Activated T-helper 2 cell treated with anti-CD3 and anti-CD28 coated beads, Interferon-gamma antibody, Interleukin-2, Interleukin-4, amounts not matched to agents 10 μg/mL and 5 μg/mL and 100 μg/mL, durations not matched to agents 14 hours and 24 hours and 36 hours (primary cell): ENCODE measurements at regions of chr12 and their contacts with region 1.

Region 1: DNA sequence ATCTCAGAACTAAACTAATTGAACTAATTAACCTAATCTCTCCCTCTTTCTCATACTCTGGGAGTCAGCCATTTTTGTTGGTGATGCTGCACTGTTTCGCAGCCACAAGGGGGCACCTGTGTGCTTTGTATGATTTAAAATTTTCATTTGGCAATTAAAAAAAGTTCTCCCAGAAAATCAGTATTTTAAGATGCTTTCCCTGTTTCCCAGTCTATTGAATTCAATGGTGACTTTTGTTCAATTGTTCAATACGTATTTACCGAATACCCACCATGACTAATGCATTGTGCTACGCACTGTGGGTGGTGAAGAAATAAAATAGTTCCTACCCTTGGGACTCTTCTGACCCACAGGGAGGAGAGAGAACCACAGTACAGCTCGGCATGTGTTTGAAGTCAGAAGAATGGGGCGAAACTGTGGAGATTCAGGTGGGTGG is 63.7 kb downstream of the ZNF664 start:
- DNase-seq: peak; percentile 16
- H3K4me3 Mint-ChIP-seq: no peak overlapping the region
- H3K27ac Mint-ChIP-seq: no peak overlapping the region
- H3K4me1 Mint-ChIP-seq: no peaks in the 10 kb centered on the region
- H3K27me3 Mint-ChIP-seq: peaks cover 24% of the 10 kb centered on the region

Region 2: GRCh38 chr12:124321040-124321481 is 284.4 kb after region 1 on chr12:
- intact Hi-C with region 1: loop called (anchors 2 kb)
- DNase-seq: peak; percentile 53
- H3K4me3 Mint-ChIP-seq: no peak overlapping the region
- H3K27ac Mint-ChIP-seq: no peak overlapping the region
- H3K4me1 Mint-ChIP-seq: no peaks in the 10 kb centered on the region
- H3K27me3 Mint-ChIP-seq: no peaks in the 10 kb centered on the region

Region 3: DNA sequence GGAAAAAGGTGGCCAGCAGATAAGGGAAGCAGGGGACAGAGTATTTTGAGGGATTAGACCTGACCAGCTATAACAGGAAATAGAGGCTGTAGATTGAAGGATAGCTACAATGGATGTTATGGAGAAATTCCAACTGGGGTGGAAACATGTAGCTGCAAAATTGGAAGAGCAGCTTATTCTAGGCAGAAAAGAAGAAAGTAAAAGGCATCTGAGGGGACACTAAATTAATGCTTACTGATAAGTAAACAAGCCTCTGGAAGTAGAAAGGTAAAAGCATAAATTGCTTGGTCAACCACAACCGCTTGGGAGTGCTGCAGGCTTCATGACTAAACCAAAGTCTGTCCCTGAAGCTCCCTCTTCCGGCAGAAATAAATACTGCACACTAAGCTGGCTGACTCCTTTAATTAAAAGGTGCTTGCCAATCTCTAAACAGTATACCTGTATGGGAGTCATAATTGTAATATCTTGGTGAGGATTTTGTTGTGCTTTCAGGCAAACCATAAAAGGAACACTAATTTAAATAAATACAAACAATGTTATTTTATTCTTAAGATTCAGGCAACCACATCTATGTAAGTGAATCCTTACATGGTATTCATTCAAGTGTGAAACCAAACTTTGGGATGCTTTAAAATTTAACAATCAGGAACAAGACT is 870.0 kb after region 1 on chr12:
- intact Hi-C with region 1: loop called (anchors 1 kb)
- DNase-seq: peak; percentile 83
- H3K4me3 Mint-ChIP-seq: no peak overlapping the region
- H3K27ac Mint-ChIP-seq: peak overlapping the region; percentile 58
- H3K4me1 Mint-ChIP-seq: peaks cover 24% of the 10 kb centered on the region
- H3K27me3 Mint-ChIP-seq: no peaks in the 10 kb centered on the region